Activated CD4-positive, alpha-beta memory T cell treated with anti-CD3 and anti-CD28 coated beads for 36 hours (primary cell): ENCODE measurements at regions of chr6 and their contacts with region 1.

Region 1: DNA sequence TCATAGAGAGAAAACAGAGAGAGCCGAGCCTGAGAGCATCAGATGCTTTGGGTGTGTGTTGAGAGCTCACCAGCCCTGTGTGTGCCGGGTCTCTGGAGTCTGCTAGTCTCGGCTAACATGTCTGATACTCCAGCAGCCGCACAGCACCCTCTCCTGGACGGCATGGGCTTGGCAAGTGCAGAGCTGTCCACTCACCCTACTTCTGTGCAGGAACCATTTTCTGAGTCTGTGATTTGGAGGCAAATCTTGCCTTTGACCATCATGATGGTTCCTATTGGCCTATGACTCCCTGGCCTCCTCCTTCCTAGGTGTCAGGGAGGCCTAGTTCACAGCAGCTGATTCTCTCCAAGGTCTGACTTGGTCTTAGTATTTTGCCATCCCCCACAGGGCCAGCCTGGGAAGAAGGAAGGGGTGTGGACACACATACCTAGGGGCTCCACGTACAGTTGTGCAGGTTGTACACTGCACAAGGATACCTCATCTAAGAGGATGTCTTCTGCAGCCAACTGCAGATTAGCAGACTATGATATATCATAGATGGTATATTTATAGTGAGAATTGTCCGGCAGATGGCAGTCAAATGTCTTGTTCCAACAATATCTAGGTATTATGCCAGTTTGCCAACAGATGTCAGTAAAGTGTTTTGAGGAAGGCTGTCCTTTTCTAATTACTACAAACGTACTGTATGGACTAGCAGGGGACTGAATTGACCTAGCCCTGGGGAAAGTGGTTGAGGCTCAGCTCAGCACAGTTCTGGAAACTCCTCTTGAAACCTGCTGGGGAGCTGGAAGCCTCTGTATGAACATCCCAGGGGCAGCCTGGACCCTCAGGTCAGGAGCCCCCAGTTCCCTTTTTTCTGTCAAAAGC is 13.0 kb downstream of the FGD2 start:
- DNase-seq: peak; percentile 96
- H3K4me3 Mint-ChIP-seq: no peak overlapping the region
- H3K27ac Mint-ChIP-seq: peak overlapping the region; percentile 61
- H3K4me1 Mint-ChIP-seq: peaks cover 44% of the 10 kb centered on the region
- H3K27me3 Mint-ChIP-seq: no peaks in the 10 kb centered on the region

Region 2: GRCh38 chr6:35512438-35513155 is 1505.8 kb before region 1 on chr6 and contains the start of gene TULP1:
- CTCF ChIA-PET with region 1: no interaction called
- POLR2A ChIA-PET with region 1: no interaction called
- intact Hi-C with region 1: no loop called
- DNase-seq: no peak
- H3K4me3 Mint-ChIP-seq: no peak within 1 kb of the TSS
- H3K27ac Mint-ChIP-seq: no peak within 1 kb of the TSS
- H3K4me1 Mint-ChIP-seq: no peaks in the 10 kb centered on the region
- H3K27me3 Mint-ChIP-seq: peaks cover 11% of the 10 kb centered on the region
- total RNA-seq, gene TULP1: not detected

Region 3: DNA sequence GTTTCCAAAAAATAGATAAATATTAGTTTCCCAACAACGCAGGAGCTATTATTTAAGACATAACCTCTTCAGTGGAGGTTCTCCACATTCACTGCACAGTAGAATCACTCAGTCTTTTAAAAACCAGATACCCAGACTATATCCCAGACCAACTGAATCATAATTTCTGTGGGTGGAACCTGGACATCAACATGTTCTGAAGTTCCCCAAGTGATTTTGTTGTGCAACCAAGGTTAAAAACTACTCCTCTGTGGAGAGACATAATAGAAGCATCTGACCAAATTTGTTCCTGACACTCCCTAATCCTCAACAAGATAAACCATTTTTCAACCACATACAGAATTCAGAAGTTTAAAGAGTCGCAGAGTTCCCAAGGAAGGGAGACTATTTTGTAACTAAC is 513.4 kb before region 1 on chr6:
- CTCF ChIA-PET with region 1: no interaction called
- POLR2A ChIA-PET with region 1: no interaction called
- intact Hi-C with region 1: no loop called
- DNase-seq: no peak
- H3K4me3 Mint-ChIP-seq: no peak overlapping the region
- H3K27ac Mint-ChIP-seq: no peak overlapping the region
- H3K4me1 Mint-ChIP-seq: peaks cover 28% of the 10 kb centered on the region
- H3K27me3 Mint-ChIP-seq: no peaks in the 10 kb centered on the region

Region 4: GRCh38 chr6:36780442-36781177 is 237.8 kb before region 1 on chr6:
- CTCF ChIA-PET with region 1: interaction called, 19 read pairs
- POLR2A ChIA-PET with region 1: no interaction called
- intact Hi-C with region 1: loop called (anchors 1 kb)
- DNase-seq: no peak
- H3K4me3 Mint-ChIP-seq: no peak overlapping the region
- H3K27ac Mint-ChIP-seq: no peak overlapping the region
- H3K4me1 Mint-ChIP-seq: peaks cover 2% of the 10 kb centered on the region
- H3K27me3 Mint-ChIP-seq: no peaks in the 10 kb centered on the region

Region 5: DNA sequence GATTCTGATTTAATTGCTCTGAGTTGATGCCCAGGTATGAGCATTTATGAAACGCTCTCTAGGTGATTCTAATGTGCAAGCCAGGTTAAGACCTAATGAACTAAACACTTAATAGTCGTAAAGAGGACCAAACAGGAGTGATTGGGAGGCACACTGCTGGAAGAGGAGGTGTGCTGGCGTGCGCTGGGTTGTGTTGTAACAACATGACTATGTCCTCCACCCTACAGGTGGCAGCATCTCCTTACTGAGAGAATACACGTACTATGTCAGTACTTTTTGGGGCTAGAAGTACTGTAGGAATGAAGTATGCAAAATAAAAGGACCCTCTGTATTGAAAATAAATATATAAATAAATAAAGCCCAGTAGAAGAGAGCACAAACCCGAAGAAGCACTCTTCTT is 120.8 kb before region 1 on chr6:
- CTCF ChIA-PET with region 1: interaction called, 19 read pairs
- POLR2A ChIA-PET with region 1: no interaction called
- intact Hi-C with region 1: no loop called
- DNase-seq: no peak
- H3K4me3 Mint-ChIP-seq: no peak overlapping the region
- H3K27ac Mint-ChIP-seq: no peak overlapping the region
- H3K4me1 Mint-ChIP-seq: peaks cover 13% of the 10 kb centered on the region
- H3K27me3 Mint-ChIP-seq: no peaks in the 10 kb centered on the region

Region 6: GRCh38 chr6:37029249-37029971 is 11.0 kb after region 1 on chr6:
- CTCF ChIA-PET with region 1: interaction called, 114 read pairs
- POLR2A ChIA-PET with region 1: no interaction called
- intact Hi-C with region 1: loop called (anchors 1 kb)
- DNase-seq: peak; percentile 72
- H3K4me3 Mint-ChIP-seq: no peak overlapping the region
- H3K27ac Mint-ChIP-seq: peak overlapping the region; percentile 51
- H3K4me1 Mint-ChIP-seq: peaks cover 53% of the 10 kb centered on the region
- H3K27me3 Mint-ChIP-seq: no peaks in the 10 kb centered on the region

Region 7: GRCh38 chr6:37110500-37111461 is 92.3 kb after region 1 on chr6:
- CTCF ChIA-PET with region 1: interaction called, 4 read pairs
- POLR2A ChIA-PET with region 1: no interaction called
- intact Hi-C with region 1: loop called (anchors 1 kb)
- DNase-seq: peak; percentile 75
- H3K4me3 Mint-ChIP-seq: no peak overlapping the region
- H3K27ac Mint-ChIP-seq: peak overlapping the region; percentile 82
- H3K4me1 Mint-ChIP-seq: peaks cover 28% of the 10 kb centered on the region
- H3K27me3 Mint-ChIP-seq: no peaks in the 10 kb centered on the region

Region 8: DNA sequence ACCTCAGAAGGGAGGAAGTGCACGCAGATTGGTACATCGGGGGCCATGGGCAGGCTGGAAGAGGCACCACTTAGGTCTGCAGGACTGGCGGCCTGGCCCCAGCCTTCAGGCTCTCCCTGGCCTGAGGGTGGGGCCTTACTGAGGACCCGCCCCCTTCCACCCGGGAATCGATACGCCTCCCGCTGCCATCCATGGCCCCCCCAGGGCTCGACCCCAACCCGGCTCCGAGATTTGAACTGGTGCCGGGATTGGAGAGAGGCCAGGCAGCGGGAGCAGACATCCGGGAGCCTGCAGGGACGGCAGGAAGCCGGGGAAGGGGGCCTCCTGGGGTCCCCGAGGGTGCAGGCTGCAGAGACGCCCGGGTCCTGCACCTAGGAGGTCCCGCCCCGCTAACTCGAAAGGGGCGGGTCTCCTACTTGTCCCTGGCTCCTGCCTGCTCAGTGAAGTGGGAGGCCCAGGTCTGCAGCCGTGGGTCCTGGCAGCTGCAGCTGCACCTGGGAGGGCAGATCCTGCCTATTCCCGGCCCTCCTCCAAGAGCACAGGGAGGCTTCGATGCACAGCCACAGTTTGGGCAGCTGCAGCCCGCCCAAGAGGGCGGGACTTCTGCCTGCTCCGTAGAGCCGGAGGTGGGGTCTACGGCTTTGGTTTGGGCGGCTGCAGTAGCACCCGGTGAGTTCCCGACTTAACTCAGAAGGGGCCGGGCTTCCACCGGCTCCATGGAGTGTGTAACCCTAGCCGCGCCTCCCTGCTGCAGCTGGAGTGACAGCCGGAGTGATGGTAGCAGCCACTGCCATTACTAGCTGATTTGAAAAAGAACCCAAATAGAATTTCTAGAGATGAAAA is 203.9 kb after region 1 on chr6:
- CTCF ChIA-PET with region 1: interaction called, 55 read pairs
- POLR2A ChIA-PET with region 1: no interaction called
- intact Hi-C with region 1: no loop called
- DNase-seq: peak; percentile 89
- H3K4me3 Mint-ChIP-seq: peak overlapping the region; percentile 73
- H3K27ac Mint-ChIP-seq: no peak overlapping the region
- H3K4me1 Mint-ChIP-seq: peaks cover 18% of the 10 kb centered on the region
- H3K27me3 Mint-ChIP-seq: no peaks in the 10 kb centered on the region